A549 (cell line): ENCODE measurements at regions of chr7 and their contacts with region 1.

Region 1: DNA sequence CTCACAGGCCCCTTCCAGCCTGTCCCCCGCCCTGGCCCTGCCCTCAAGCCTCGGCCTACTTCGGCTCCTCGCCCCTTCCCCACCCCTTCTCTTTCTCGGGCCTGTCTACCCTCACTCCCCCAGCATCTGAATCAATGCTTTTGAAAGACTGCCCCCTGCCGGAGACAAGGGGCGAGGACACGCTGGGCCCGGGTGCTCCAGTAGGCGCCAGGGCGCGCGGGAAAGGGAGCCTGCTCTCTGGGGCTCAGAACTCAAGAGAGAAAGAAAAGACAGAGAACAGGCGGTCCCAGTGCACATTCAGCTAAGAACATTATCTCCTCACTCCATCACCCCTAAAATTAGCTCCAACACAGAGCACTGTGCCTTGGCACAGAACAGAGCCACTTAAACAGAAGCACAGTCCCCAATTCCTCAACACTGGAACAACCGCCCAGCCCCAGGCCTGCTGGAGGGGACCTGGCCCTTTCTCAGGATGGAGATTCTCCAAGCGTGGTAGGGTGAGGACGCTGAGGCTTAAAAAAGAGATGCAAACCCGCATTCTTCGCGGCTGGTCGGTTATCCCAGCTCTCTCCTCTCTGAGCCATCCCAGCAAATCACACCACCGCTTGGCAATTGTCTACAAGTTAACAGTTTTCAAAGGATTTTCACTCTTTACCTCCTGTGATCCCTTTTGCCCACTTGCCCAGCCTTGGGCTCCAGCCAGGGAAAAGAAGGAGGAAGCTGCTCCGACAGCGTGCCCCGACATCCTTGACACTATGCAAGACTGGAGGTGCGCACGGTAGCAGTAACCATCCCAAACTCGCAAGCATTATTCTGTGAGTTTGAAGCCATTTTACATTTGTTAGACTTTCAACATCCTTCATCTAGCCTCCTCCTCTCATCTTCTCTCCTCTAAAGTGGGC is 2.1 kb downstream of the GIGYF1 start:
- DNase-seq: peak; percentile 74 to 93
- ATAC-seq: peak; percentile 72 to 94; a peak in 5 of 6 replicates
- H3K4me3 ChIP-seq: no peak overlapping the region
- H3K27ac ChIP-seq: no peak overlapping the region
- H3K4me1 ChIP-seq: peaks cover 26% of the 10 kb centered on the region
- CTCF ChIP-seq: peak; percentile 87
- EP300 ChIP-seq: no peak
- POLR2A ChIP-seq: no peak
- RAD21 ChIP-seq: peak; percentile 75 to 78

Region 2: DNA sequence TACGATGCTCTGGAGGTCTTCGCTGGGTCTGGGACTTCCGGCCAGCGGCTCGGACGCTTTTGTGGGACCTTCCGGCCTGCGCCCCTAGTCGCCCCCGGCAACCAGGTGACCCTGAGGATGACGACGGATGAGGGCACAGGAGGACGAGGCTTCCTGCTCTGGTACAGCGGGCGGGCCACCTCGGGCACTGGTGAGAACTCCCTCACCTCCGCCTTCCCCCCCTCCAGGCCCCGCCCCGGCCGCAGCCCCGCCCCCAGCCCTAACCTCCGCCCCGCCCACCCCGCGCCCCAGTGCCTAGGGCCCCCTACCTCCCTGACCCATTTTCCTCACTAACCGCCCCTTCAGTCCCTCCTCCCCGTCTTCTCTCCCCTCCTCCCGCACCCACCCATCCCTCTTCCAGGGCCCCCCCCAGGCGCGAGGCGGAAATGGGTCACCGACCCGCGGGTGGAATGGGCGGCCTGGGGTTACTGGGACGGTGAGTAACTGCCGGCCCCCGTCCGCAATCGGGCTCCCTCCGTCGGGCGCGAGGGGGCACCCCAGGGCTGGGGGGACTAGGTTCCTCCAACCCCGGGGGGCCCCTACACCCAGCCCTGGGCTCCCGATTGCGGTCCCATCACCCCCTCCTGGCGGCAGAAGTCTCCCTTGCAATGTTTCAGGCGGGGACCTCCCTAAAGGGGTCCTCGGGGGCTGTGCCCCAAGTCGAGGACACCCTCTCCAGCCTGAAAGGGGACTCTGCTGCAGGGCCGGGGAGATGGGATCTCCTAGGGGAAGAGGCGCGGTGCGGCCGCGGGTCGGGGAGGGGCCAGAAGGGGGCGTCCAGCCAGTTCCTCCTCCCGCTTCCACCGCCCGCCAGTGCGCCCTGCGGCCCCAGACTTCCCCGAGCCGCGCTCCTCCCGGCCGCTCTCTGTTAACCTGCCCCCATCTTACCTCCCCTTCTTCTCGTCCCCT is 87.6 kb before region 1 on chr7:
- CTCF ChIA-PET with region 1: interaction called, 32 read pairs
- POLR2A ChIA-PET with region 1: no interaction called
- DNase-seq: peak; percentile 78 to 90
- ATAC-seq: peak; percentile 80 to 90
- H3K4me3 ChIP-seq: peak overlapping the region; percentile 74
- H3K27ac ChIP-seq: peak overlapping the region; percentile 84 to 86
- H3K4me1 ChIP-seq: 0 out of 3 replicates have a peak, but pooled peaks cover 8% of the 10 kb centered on the region
- CTCF ChIP-seq: peak; percentile 53
- EP300 ChIP-seq: no peak
- POLR2A ChIP-seq: peak; percentile 33; the same call in 1 of the 2 replicates
- RAD21 ChIP-seq: no peak; a peak in 3 of 5 replicates

Region 3: DNA sequence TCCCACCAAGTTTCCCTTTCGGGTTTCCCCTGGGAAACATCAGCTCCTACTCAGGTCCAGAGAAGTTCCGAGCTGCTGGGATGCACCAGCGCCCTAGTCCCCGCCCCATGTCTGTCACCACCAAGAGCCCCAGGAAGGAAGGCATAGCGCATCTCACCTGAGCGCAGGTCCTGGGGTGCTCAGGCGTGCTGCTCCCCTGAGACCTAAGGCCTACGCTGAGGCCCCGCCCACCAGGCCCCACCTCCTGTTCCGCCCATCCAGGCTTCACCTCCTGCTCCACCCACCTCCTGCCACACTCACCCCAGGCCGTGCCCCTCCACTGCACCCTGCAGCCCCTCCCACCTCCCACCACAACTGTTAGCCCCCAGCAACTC is 49.4 kb before region 1 on chr7:
- CTCF ChIA-PET with region 1: interaction called, 14 read pairs
- POLR2A ChIA-PET with region 1: no interaction called
- DNase-seq: peak in 1 of 2 experiments; percentile 42
- ATAC-seq: peak in 1 of 2 experiments; percentile 79; a peak in 3 of 6 replicates
- H3K4me3 ChIP-seq: no peak overlapping the region
- H3K27ac ChIP-seq: no peak overlapping the region
- H3K4me1 ChIP-seq: no peaks in the 10 kb centered on the region
- CTCF ChIP-seq: no peak
- EP300 ChIP-seq: no peak
- POLR2A ChIP-seq: no peak
- RAD21 ChIP-seq: no peak

Region 4: DNA sequence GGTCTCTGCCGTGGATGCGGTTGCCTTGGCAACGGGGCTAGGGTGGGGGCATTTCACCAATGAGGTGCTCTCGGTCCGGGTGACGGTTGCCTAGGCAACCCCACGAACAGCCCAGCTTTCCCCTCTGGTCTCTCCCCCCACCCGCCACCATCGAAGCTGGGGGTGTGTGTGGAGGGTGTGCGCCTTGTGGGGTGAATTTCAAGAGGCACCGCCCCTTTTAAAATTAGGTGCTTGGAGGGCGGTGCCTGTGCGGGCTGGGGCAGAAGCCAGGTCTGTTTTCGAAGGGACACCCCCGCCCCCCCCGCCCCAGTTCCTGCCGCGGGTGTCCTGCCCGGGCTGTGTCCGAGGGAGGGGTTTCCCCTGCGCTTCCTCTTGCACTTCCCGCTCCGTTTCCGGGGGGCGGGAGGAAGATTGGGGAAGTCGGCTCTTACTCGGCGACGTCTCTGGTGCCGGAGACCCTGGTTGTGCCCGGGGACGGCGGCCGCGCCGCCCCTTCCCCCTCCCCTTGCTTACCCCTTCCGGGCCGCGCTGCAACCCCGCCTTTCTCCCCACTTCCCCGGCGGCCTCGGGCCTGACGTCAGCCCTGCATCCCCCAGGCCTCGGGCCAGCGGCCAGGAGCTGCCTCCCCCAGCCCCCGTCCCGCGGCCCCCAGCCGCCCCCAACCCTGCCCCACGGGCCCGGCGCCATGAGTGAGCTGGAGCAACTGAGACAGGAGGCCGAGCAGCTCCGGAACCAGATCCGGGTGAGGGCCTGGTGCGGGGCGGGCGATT is 16.2 kb before region 1 on chr7:
- CTCF ChIA-PET with region 1: interaction called, 72 read pairs
- POLR2A ChIA-PET with region 1: interaction called, 6 read pairs
- DNase-seq: peak in 1 of 2 experiments; percentile 35
- ATAC-seq: no peak
- H3K4me3 ChIP-seq: peak overlapping the region; percentile 77
- H3K27ac ChIP-seq: peak overlapping the region; percentile 87 to 99; a peak in 5 of 6 replicates
- H3K4me1 ChIP-seq: peaks cover 27% of the 10 kb centered on the region
- CTCF ChIP-seq: no peak
- EP300 ChIP-seq: no peak
- POLR2A ChIP-seq: no peak
- RAD21 ChIP-seq: no peak

Region 5: GRCh38 chr7:101442521-101442981 is 750.6 kb after region 1 on chr7:
- CTCF ChIA-PET with region 1: no interaction called
- POLR2A ChIA-PET with region 1: no interaction called
- DNase-seq: no peak
- ATAC-seq: no peak
- H3K4me3 ChIP-seq: no peak overlapping the region
- H3K27ac ChIP-seq: no peak overlapping the region
- H3K4me1 ChIP-seq: no peaks in the 10 kb centered on the region
- CTCF ChIP-seq: no peak
- EP300 ChIP-seq: no peak
- POLR2A ChIP-seq: no peak
- RAD21 ChIP-seq: no peak